ENCODE measurements at regions of chr15 and their contacts with region 1.

Region 1: DNA sequence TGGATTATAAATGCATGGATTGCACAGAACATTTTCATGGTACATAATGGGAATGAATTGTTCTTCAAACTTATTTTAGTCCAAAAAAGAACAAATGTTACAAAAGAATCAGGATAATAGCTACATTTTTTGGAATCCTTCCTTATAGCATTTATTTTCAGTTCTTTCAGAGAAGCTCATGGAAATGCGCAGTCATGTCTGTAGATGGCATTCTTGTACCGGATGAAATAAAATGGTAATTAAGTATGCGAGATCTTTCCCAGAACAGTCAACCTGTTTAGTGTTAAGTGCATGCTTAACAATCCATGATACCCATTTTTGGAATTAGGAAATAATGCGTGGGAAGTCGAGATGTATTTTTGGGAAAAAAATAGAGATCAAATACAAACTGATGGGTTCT is 38.2 kb upstream of the GOLGA8B start:
- DNase-seq: no peak
- H3K4me3 ChIP-seq: no peak overlapping the region
- H3K27ac ChIP-seq: no peak overlapping the region
- H3K27me3 ChIP-seq: no peaks in the 10 kb centered on the region
- CTCF ChIP-seq: peak; percentile 56

Region 2: GRCh38 chr15:34610354-34610753 is 11.3 kb before region 1 on chr15:
- CTCF ChIA-PET with region 1: interaction called, 21 read pairs
- POLR2A ChIA-PET with region 1: no interaction called
- DNase-seq: no peak
- H3K4me3 ChIP-seq: no peak overlapping the region
- H3K27ac ChIP-seq: no peak overlapping the region
- H3K27me3 ChIP-seq: no peaks in the 10 kb centered on the region
- CTCF ChIP-seq: peak; percentile 59

Region 3: DNA sequence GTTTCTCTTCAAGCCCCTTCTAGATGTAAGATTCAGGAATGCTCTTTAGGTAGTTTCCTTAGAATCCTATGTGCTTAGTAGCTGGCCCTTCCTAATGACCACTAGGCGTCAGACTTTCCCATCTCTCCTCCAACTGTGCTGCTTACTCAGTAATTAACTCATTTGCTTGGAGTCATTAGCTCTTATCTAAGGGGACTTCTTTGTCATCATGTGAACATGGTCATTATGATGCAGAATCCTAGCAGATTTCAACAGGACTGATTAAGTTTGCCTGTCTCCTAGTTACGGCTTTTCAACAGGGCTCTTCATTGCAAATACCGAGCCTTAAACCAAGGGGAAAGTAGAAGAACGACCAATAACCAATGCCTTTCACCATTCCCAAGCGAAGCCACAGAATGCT is 86.7 kb after region 1 on chr15:
- CTCF ChIA-PET with region 1: interaction called, 18 read pairs
- POLR2A ChIA-PET with region 1: no interaction called
- DNase-seq: peak; percentile 32
- H3K4me3 ChIP-seq: no peak overlapping the region
- H3K27ac ChIP-seq: no peak overlapping the region
- H3K27me3 ChIP-seq: no peaks in the 10 kb centered on the region
- CTCF ChIP-seq: peak; percentile 96

Region 4: DNA sequence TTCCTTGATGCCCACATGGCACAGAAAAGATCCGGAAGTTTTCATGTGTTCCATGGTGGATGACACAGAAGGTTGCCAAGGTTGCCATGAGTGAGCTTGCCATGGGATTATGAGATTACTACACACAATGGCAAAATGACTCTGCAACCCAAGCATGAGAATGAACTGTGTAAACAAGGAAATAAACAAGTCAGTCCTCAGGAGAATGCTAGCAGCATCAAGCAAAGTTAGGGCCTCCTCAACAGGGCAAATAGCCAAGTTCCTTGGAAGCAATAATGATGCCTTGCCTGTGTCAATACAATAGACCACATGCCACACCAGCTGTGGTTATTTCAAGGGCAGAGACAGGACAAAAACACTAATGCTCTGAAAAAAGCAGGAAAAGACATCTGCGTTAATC is 306.1 kb after region 1 on chr15:
- CTCF ChIA-PET with region 1: interaction called, 151 read pairs
- POLR2A ChIA-PET with region 1: no interaction called
- DNase-seq: no peak
- H3K4me3 ChIP-seq: no peak overlapping the region
- H3K27ac ChIP-seq: no peak overlapping the region
- H3K27me3 ChIP-seq: no peaks in the 10 kb centered on the region
- CTCF ChIP-seq: no peak

Region 5: GRCh38 chr15:34969340-34970097 is 347.8 kb after region 1 on chr15 and contains the start of gene AQR:
- CTCF ChIA-PET with region 1: interaction called, 10 read pairs
- POLR2A ChIA-PET with region 1: no interaction called
- DNase-seq: peak; percentile 98
- H3K4me3 ChIP-seq: peak within 1 kb of the TSS; percentile 94
- H3K27ac ChIP-seq: peak within 1 kb of the TSS; percentile 69
- H3K27me3 ChIP-seq: no peaks in the 10 kb centered on the region
- CTCF ChIP-seq: peak; percentile 96
- polyA plus RNA-seq, gene AQR: 25.2 and 32.9 TPM in 2 replicates